ENCODE measurements at regions of chr6 and their contacts with region 1.

Region 1: DNA sequence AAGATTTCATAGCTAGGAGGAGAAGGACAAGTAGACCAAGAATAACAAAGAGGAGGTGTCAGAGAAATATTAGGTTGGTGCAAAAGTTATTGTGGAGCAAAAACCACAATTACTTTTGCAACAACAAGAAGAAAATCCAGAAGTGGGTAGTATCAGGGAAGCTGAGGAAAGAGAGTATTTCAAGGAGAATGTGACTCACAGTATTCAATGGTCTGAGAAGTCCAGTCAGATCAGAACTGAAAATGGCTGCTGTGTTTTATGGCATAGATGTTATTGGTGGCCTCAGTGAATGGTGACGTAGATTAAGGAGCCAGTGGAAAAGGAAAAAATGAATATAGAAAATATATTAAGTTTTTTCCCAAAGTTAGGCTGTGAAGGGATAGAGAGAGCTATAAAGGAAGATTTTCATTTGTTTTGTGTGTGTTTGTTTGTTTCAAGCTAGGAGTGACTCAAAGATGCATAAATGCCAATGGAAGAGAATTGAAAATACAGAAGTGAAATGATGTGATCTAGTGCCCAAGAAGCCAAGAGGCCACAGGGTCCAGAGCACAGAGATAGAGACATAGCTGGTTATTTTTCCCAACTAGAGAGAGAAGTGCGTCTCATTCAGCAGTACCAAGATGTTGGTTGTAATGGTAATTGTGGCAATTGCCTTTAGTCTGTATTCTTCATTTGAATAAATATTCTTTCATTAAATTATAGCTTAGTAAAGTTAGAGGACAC is 112.8 kb downstream of the ADTRP start:
- DNase-seq: no peak
- ATAC-seq: no peak
- H3K4me3 Mint-ChIP-seq: no peak overlapping the region
- H3K27ac Mint-ChIP-seq: no peak overlapping the region
- H3K4me1 Mint-ChIP-seq: no peaks in the 10 kb centered on the region
- H3K27me3 Mint-ChIP-seq: peaks cover 17% of the 10 kb centered on the region
- CTCF ChIP-seq: no peak

Region 2: GRCh38 chr6:10886691-10887535 is 778.9 kb before region 1 on chr6 and contains the start of gene SYCP2L:
- CTCF ChIA-PET with region 1: no interaction called
- POLR2A ChIA-PET with region 1: no interaction called
- intact Hi-C with region 1: loop called (anchors 10 kb)
- DNase-seq: no peak
- ATAC-seq: peak; percentile 10
- H3K4me3 Mint-ChIP-seq: peak within 1 kb of the TSS; percentile 67
- H3K27ac Mint-ChIP-seq: no peak within 1 kb of the TSS
- H3K4me1 Mint-ChIP-seq: peaks cover 39% of the 10 kb centered on the region
- H3K27me3 Mint-ChIP-seq: peaks cover 48% of the 10 kb centered on the region
- CTCF ChIP-seq: no peak
- total RNA-seq, gene SYCP2L: 0.13 and 0.17 TPM in 2 replicates

Region 3: DNA sequence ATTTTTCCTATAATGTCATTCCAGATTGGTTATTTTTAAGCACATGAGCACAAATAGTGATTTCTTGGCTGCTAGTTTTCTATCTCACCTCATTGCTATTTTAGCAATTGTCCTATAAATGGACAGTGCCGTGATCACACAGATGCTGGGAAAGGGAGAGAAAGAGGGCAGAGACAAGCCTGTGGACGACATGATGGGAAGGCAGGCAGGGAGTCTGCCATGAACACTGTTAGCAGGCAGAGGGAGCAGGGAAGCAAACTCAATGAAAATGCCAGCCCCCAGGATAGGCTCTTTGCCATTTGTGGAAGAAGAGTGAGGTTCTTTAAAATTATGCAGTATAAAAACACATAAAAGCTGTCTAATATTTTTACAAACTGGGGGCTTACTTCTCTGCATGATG is 16.0 kb after region 1 on chr6:
- CTCF ChIA-PET with region 1: no interaction called
- POLR2A ChIA-PET with region 1: no interaction called
- intact Hi-C with region 1: no loop called
- DNase-seq: no peak
- ATAC-seq: no peak
- H3K4me3 Mint-ChIP-seq: no peak overlapping the region
- H3K27ac Mint-ChIP-seq: no peak overlapping the region
- H3K4me1 Mint-ChIP-seq: no peaks in the 10 kb centered on the region
- H3K27me3 Mint-ChIP-seq: peaks cover 13% of the 10 kb centered on the region
- CTCF ChIP-seq: no peak